ENCODE measurements at regions of chrX and their contacts with region 1.

Region 1: DNA sequence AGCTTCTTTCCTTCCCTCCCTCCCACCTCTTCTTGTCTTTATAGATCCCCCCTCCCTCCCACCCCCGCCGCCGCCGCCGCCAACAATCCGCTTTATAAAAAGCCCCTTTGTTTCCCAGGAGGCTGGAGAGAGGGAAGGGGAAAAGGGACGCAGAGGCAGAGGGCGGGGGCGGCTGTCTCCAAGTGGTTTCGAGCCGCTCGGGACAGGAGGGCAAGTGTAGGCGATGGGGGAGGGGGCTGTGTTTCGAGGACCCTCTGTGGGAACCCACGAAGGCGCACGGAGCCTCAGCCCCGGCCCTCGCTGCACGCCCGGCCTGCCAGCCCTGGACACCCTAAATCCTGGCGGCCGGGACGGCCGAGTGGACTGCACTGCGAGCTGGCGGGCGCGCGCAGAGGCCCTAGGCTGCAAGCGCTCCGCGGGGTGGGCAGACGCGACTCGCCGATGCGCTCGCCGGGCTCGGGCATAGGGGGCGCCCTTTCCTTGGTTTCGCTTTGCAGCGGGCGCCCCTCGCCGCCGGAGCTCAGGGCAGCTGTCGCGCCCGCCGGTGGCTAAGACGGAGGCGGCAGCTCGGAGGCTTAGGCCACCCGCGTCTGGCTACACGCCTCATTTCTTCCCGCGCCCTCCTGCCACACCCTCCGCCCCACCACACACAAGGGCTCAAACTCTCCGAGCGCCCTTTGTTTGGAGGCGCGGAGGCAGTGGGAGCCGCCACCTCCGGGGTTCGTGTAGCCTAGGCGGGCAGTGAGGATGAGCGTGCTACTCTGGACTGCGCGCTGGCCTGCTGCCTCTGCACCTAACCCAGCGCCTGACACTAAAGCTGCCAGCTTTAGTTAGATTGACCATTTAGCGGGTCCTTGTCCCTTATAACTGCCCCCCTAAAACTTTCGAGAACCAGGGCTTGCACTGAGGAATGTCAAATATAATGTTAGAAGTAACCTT is 2.2 kb downstream of the MAMLD1 start:
- DNase-seq: peak in 1 of 2 experiments; percentile 74
- H3K4me3 ChIP-seq: peak overlapping the region; percentile 92
- H3K27ac ChIP-seq: no peak overlapping the region
- H3K4me1 ChIP-seq: peaks cover 7% of the 10 kb centered on the region; the same call in 1 of the 2 replicates
- H3K27me3 ChIP-seq: peaks cover 17% of the 10 kb centered on the region; the same call in 1 of the 2 replicates
- CTCF ChIP-seq: peak; percentile 71

Region 2: DNA sequence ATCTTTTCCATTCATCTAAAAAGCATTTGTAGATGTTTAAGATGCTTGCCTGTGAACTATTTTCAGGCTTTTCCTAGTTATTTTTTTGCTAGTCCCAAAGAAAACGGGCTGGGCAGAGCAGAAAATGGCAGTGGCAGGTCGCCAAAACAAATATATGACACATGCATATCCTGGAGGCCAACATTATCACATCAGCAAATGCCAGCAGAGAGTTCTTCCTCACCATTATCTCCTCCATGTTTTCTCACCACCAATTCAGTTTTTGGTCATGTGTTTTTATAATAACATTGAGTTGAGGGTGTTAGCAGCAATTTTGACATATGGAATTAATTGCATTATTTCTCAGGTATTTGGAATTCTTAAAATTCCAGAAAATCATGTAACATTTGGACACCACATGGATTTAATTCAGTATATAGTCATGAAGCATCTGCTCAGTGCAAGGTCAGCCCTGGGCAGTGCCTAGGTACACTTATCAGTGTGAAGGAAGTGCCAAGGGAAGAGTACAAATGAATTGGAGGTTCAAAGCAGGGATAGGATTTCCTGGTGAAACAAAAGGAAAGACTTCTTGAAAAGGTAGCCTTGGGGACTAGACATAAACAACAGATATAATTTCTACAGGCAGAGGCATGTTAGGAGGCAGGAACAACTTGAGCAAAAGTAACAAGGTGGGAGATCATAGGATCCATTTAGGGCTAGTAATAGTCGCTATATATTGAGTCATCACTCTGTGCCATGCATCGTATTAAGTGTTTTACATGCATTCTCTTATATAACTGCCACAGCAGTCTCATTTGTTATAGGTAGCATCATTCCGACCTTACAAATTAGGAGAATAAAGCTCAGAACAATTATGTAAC is 328.9 kb before region 1 on chrX:
- CTCF ChIA-PET with region 1: no interaction called
- POLR2A ChIA-PET with region 1: no interaction called
- intact Hi-C with region 1: loop called (anchors 2 kb)
- DNase-seq: peak; percentile 67 to 74
- H3K4me3 ChIP-seq: no peak overlapping the region
- H3K27ac ChIP-seq: peak overlapping the region; percentile 53
- H3K4me1 ChIP-seq: peaks cover 59% of the 10 kb centered on the region
- H3K27me3 ChIP-seq: no peaks in the 10 kb centered on the region
- CTCF ChIP-seq: no peak

Region 3: DNA sequence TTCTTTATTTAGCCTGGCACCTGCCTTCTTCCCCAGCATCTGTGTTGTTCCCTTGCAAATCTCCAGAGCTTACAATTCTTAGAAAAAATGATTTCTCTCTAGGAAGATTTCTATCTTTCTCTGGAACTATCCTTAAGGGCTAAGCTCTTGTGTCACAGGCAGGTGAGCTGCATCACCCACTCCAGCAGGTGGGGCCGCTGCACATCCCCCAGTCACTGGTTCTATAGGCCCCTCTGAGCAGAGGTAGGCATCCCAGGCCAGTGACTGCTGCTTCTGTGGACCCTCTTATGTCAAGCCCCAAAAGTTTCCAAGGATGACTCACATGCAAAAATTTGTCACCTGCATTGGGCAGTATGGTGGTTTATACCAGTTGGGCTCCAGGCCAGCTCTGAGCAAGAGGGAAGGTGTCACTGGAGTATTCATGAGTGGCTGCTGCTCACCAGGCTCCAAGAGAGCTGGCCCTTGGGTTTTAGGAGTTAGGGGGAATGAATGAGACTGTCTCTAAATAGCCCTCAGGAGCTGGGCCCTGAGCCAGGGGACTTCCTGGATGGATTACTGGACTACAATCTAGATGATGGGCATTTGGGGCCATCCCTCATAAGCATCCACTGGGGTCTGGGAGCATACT is 218.9 kb before region 1 on chrX:
- CTCF ChIA-PET with region 1: no interaction called
- POLR2A ChIA-PET with region 1: no interaction called
- intact Hi-C with region 1: loop called (anchors 10 kb)
- DNase-seq: peak in 1 of 2 experiments; percentile 34
- H3K4me3 ChIP-seq: no peak overlapping the region
- H3K27ac ChIP-seq: no peak overlapping the region
- H3K4me1 ChIP-seq: no peaks in the 10 kb centered on the region
- H3K27me3 ChIP-seq: no peaks in the 10 kb centered on the region
- CTCF ChIP-seq: 0 out of 2 replicates have a peak, but pooled peaks have one; percentile 23

Region 4: GRCh38 chrX:150303386-150304097 is 61.8 kb before region 1 on chrX:
- CTCF ChIA-PET with region 1: no interaction called
- POLR2A ChIA-PET with region 1: no interaction called
- intact Hi-C with region 1: no loop called
- DNase-seq: peak; percentile 12 to 87
- H3K4me3 ChIP-seq: no peak overlapping the region; the same call in 1 of the 2 replicates
- H3K27ac ChIP-seq: peak overlapping the region; percentile 30
- H3K4me1 ChIP-seq: peaks cover 35% of the 10 kb centered on the region
- H3K27me3 ChIP-seq: no peaks in the 10 kb centered on the region
- CTCF ChIP-seq: no peak

Region 5: GRCh38 chrX:150324035-150324728 is 41.1 kb before region 1 on chrX:
- CTCF ChIA-PET with region 1: no interaction called
- POLR2A ChIA-PET with region 1: no interaction called
- intact Hi-C with region 1: loop called (anchors 2 kb)
- DNase-seq: peak; percentile 50 to 74
- H3K4me3 ChIP-seq: no peak overlapping the region
- H3K27ac ChIP-seq: peak overlapping the region; percentile 39
- H3K4me1 ChIP-seq: peaks cover 26% of the 10 kb centered on the region
- H3K27me3 ChIP-seq: no peaks in the 10 kb centered on the region
- CTCF ChIP-seq: no peak

Region 6: GRCh38 chrX:150587585-150588503 is 222.5 kb after region 1 on chrX:
- CTCF ChIA-PET with region 1: no interaction called
- POLR2A ChIA-PET with region 1: interaction called, 3 read pairs
- intact Hi-C with region 1: loop called (anchors 5 kb)
- DNase-seq: peak in 1 of 2 experiments; percentile 44
- H3K4me3 ChIP-seq: no peak overlapping the region
- H3K27ac ChIP-seq: no peak overlapping the region
- H3K4me1 ChIP-seq: no peaks in the 10 kb centered on the region
- H3K27me3 ChIP-seq: no peaks in the 10 kb centered on the region
- CTCF ChIP-seq: peak; percentile 94

Region 7: GRCh38 chrX:150700107-150700506 is 334.8 kb after region 1 on chrX:
- CTCF ChIA-PET with region 1: no interaction called
- POLR2A ChIA-PET with region 1: no interaction called
- intact Hi-C with region 1: no loop called
- DNase-seq: no peak
- H3K4me3 ChIP-seq: no peak overlapping the region
- H3K27ac ChIP-seq: no peak overlapping the region
- H3K4me1 ChIP-seq: peaks cover 19% of the 10 kb centered on the region
- H3K27me3 ChIP-seq: no peaks in the 10 kb centered on the region
- CTCF ChIP-seq: no peak

Region 8: DNA sequence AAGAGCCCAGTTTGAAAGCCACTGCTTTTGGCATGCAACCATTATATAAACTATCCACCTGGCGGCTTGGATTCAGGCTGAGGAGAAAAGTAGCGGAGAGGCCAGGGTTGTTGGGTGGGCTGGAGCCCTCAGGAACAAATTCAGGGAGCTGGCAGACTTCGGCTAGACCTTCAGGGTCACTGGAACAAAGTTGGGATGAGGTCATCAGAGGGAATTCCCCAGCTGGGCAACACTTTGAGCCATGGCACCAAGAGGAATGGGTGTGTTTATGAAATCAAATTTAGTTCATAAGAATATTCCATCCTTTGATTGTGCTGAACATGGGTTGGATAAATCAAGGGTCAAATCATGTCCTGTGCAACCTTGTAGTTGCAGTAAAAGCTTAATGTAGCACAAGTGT is 349.9 kb after region 1 on chrX:
- CTCF ChIA-PET with region 1: interaction called, 3 read pairs
- POLR2A ChIA-PET with region 1: no interaction called
- intact Hi-C with region 1: loop called (anchors 2 kb)
- DNase-seq: no peak
- H3K4me3 ChIP-seq: no peak overlapping the region
- H3K27ac ChIP-seq: no peak overlapping the region
- H3K4me1 ChIP-seq: peaks cover 6% of the 10 kb centered on the region
- H3K27me3 ChIP-seq: no peaks in the 10 kb centered on the region
- CTCF ChIP-seq: no peak